ENCODE measurements at regions of chr7 and their contacts with region 1.

Region 1: GRCh38 chr7:107743567-107744344 is at the start of gene CBLL1:
- DNase-seq: peak; percentile 91
- ATAC-seq: peak; percentile 97
- H3K4me3 ChIP-seq: peak within 1 kb of the TSS; percentile 86 to 92 (median 87)
- H3K27ac ChIP-seq: peak within 1 kb of the TSS; percentile 98
- H3K4me1 ChIP-seq: peaks cover 37% of the 10 kb centered on the region
- H3K27me3 ChIP-seq: no peaks in the 10 kb centered on the region; a peak in 1 of 5 replicates
- CTCF ChIP-seq: peak; percentile 95
- EP300 ChIP-seq: no peak
- POLR2A ChIP-seq: peak; percentile 83
- RAD21 ChIP-seq: peak; percentile 95
- total RNA-seq, gene CBLL1: 10.5 and 12.2 TPM in 2 replicates

Region 2: GRCh38 chr7:107168233-107169119 is 575.3 kb before region 1 on chr7 and contains the start of gene HBP1:
- CTCF ChIA-PET with region 1: no interaction called
- POLR2A ChIA-PET with region 1: interaction called, 28 read pairs
- in situ Hi-C with region 1: no loop called
- intact Hi-C with region 1: no loop called
- DNase-seq: peak; percentile 100
- ATAC-seq: peak; percentile 94
- H3K4me3 ChIP-seq: peak within 1 kb of the TSS; percentile 97 to 100 (median 98)
- H3K27ac ChIP-seq: peak within 1 kb of the TSS; percentile 96
- H3K4me1 ChIP-seq: peaks cover 7% of the 10 kb centered on the region
- H3K27me3 ChIP-seq: no peaks in the 10 kb centered on the region; a peak in 1 of 5 replicates
- CTCF ChIP-seq: no peak
- EP300 ChIP-seq: no peak; a peak in 1 of 4 replicates
- POLR2A ChIP-seq: peak; percentile 47 to 67; a peak in 3 of 4 replicates
- RAD21 ChIP-seq: peak; percentile 38; the same call in 1 of the 2 replicates
- total RNA-seq, gene HBP1: 22.9 and 29.8 TPM in 2 replicates

Region 3: DNA sequence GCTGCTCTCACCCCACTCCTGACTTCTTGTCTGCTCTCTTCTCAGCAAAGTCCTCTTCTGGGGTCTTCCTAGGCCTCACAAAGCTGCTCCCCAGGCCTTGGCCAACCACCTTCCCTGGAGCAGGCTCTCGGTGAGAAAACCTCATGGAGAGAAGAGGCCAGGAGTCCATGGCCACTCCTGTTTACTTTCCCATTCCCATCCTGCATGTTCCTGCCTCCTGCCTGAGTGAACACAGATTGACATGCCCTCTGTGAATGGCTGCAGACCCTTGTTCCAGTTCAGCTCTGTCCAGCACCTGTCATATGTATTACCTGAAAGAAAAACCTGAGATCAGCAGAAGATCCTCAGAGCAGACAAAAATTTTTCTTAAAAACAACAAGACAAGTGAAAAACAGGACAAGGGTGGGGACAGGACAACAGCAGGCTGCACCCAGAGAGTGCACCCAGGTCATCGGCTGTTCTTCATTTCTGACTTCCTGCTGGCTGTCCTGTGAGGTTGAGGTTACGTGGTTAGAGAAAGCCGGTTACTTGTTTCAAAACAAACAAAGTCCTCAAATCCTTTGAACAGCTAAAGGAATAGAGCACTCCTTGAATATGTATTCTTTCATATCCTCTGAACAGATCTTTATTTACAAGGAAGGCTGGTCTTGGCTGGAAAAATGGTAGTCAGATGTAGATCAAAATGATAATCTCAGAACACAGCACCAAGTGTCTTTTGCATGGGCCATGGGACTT is 113.2 kb after region 1 on chr7:
- CTCF ChIA-PET with region 1: no interaction called
- POLR2A ChIA-PET with region 1: interaction called, 18 read pairs
- in situ Hi-C with region 1: no loop called
- intact Hi-C with region 1: no loop called
- DNase-seq: peak; percentile 67
- ATAC-seq: peak; percentile 96
- H3K4me3 ChIP-seq: peak overlapping the region in 2 of 3 experiments; percentile 2 to 42; a peak in 2 of 6 replicates
- H3K27ac ChIP-seq: peak overlapping the region; percentile 62
- H3K4me1 ChIP-seq: peaks cover 61% of the 10 kb centered on the region
- H3K27me3 ChIP-seq: peaks cover 3 to 38% of the 10 kb centered on the region in 2 experiments; a peak in 4 of 5 replicates
- CTCF ChIP-seq: peak; percentile 25; the same call in 1 of the 2 replicates
- EP300 ChIP-seq: peak in 1 of 2 experiments; percentile 62; a peak in 1 of 4 replicates
- POLR2A ChIP-seq: no peak
- RAD21 ChIP-seq: 0 out of 2 replicates have a peak, but pooled peaks have one; percentile 15

Region 4: DNA sequence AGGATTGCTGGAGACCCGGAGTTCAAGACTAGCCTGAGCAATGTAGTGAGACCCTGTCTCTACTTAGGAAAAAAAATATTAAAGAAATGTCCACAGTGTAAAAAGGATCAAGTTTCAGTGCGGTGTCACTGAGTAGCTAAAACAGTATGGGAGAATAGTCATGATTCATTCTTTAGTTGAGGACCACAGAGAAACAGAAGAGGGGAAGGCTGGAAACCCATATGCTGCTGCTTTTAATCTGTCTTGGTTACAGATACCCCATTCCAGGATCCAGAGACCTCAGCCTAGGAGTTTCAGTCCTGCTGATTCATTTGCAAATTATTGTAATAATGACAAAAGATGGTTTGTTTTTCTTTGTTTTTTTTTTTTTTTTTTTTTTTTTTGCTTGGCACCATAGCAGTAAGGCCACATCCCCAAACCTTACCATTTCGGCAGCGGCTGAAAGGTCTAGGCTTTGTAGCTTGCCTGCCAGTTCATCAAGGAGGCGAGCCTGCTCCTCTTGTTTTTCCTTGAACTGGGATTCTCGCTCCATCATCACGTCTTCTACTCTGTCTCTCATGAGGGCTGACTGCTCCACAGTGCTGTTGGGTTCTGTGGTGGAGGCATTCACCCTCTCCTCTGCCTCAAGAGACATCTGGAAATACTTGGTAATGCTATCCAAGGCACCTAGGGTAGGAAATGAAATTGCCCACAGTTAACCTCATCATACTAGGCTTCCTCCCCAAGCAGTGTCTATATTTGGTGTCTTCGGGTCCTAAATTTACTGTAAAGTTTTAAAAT is 191.4 kb after region 1 on chr7:
- CTCF ChIA-PET with region 1: no interaction called
- POLR2A ChIA-PET with region 1: no interaction called
- in situ Hi-C with region 1: no loop called
- intact Hi-C with region 1: no loop called
- DNase-seq: no peak
- ATAC-seq: no peak
- H3K4me3 ChIP-seq: no peak overlapping the region
- H3K27ac ChIP-seq: no peak overlapping the region
- H3K4me1 ChIP-seq: no peaks in the 10 kb centered on the region
- H3K27me3 ChIP-seq: no peaks in the 10 kb centered on the region
- CTCF ChIP-seq: no peak
- EP300 ChIP-seq: no peak
- POLR2A ChIP-seq: no peak
- RAD21 ChIP-seq: no peak

Region 5: GRCh38 chr7:108016841-108017775 is 273.4 kb after region 1 on chr7:
- CTCF ChIA-PET with region 1: no interaction called
- POLR2A ChIA-PET with region 1: no interaction called
- in situ Hi-C with region 1: no loop called
- intact Hi-C with region 1: loop called (anchors 10 kb)
- DNase-seq: peak; percentile 55
- ATAC-seq: peak; percentile 72
- H3K4me3 ChIP-seq: no peak overlapping the region
- H3K27ac ChIP-seq: no peak overlapping the region
- H3K4me1 ChIP-seq: peaks cover 68% of the 10 kb centered on the region
- H3K27me3 ChIP-seq: peaks cover 0 to 7% of the 10 kb centered on the region in 2 experiments; a peak in 3 of 5 replicates
- CTCF ChIP-seq: peak; percentile 66
- EP300 ChIP-seq: no peak
- POLR2A ChIP-seq: no peak
- RAD21 ChIP-seq: no peak

Region 6: DNA sequence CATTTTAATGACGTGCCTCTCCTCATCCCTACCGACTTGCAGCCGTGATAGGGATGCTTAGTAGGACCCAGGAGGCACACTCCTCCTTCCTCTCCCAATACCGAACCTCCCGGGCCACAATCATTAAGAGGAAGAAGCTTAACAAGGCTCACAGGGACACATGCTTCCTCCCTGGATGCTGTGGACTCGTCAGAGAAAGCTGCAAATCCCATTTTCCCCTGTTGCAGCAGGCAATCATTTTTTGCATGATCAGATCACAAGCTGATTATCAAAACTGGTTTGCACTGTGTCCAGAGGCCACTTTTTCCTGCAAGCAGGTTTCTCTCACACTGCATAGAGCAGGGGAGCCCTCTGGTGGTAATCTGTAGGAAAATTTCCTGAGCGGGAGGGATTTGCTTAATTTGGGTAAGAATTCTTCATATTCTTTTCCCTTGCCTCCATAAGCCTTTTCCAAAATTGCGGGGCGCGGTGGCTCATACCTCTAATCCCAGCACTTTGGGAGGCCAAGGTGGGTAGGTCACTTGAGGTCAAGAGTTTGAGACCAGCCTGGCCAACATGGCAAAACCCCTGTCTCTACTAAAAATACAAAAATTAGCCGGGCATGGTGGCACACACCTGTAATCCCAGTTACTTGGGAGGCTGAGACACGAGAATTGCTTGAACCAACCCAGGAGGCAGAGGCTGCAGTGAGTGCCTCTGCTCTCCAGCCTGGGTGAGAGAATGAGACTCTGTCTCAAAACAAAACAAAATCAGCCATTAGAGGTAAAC is 402.5 kb after region 1 on chr7:
- CTCF ChIA-PET with region 1: no interaction called
- POLR2A ChIA-PET with region 1: no interaction called
- in situ Hi-C with region 1: no loop called
- intact Hi-C with region 1: loop called (anchors 10 kb)
- DNase-seq: peak; percentile 72
- ATAC-seq: peak; percentile 89
- H3K4me3 ChIP-seq: no peak overlapping the region; a peak in 1 of 6 replicates
- H3K27ac ChIP-seq: no peak overlapping the region
- H3K4me1 ChIP-seq: no peaks in the 10 kb centered on the region
- H3K27me3 ChIP-seq: peaks cover 0 to 9% of the 10 kb centered on the region in 2 experiments; a peak in 1 of 5 replicates
- CTCF ChIP-seq: peak; percentile 86
- EP300 ChIP-seq: no peak
- POLR2A ChIP-seq: no peak
- RAD21 ChIP-seq: peak; percentile 89